SK-N-SH (cell line): ENCODE measurements at regions of chr14 and their contacts with region 1.

Region 1: GRCh38 chr14:62179367-62180018 is 417.3 kb downstream of the SNAPC1 start:
- DNase-seq: peak; percentile 22
- H3K4me3 ChIP-seq: no peak overlapping the region
- H3K27ac ChIP-seq: no peak overlapping the region
- H3K4me1 ChIP-seq: peaks cover 0 to 7% of the 10 kb centered on the region in 2 experiments; a peak in 1 of 4 replicates
- H3K27me3 ChIP-seq: no peaks in the 10 kb centered on the region
- CTCF ChIP-seq: peak; percentile 80
- EP300 ChIP-seq: no peak
- RAD21 ChIP-seq: peak; percentile 87

Region 2: GRCh38 chr14:61456720-61457119 is 722.8 kb before region 1 on chr14:
- CTCF ChIA-PET with region 1: no interaction called
- POLR2A ChIA-PET with region 1: no interaction called
- DNase-seq: peak; percentile 60
- H3K4me3 ChIP-seq: no peak overlapping the region
- H3K27ac ChIP-seq: no peak overlapping the region
- H3K4me1 ChIP-seq: peaks cover 0 to 9% of the 10 kb centered on the region in 2 experiments; a peak in 1 of 4 replicates
- H3K27me3 ChIP-seq: no peaks in the 10 kb centered on the region
- CTCF ChIP-seq: peak; percentile 93
- EP300 ChIP-seq: no peak
- RAD21 ChIP-seq: peak; percentile 85

Region 3: DNA sequence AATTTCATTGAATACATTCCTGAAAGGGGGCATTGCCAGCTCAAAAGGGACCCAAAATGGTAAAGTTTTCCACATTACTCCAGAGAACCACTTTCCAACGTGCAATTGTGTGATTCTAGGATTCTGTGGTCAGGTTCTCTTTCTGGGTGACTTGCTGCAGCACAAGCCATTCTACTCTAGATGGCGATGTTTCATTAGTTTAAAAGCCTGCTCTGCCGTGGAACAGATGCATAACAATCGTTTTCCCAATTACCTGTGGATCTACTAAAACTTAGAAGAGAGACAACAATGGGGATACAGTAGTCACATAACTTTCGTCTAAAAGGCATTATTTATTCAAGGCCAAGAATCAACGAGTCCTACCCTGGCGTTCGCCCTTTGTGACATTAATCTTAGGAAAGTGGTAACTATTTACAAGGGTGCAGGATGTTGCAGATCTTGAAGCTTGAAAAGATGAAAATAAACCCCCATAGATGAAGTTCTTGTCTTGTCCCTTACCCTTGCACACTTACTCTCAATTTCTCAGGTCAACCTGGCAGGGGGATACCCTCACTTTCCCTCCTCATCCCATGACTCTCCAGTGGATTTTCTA is 16.4 kb before region 1 on chr14:
- CTCF ChIA-PET with region 1: interaction called, 24 read pairs
- POLR2A ChIA-PET with region 1: no interaction called
- DNase-seq: peak; percentile 40
- H3K4me3 ChIP-seq: no peak overlapping the region; a peak in 1 of 4 replicates
- H3K27ac ChIP-seq: no peak overlapping the region
- H3K4me1 ChIP-seq: peaks cover 0 to 2% of the 10 kb centered on the region in 2 experiments; a peak in 2 of 4 replicates
- H3K27me3 ChIP-seq: peaks cover 19% of the 10 kb centered on the region; the same call in 1 of the 2 replicates
- CTCF ChIP-seq: peak; percentile 89
- EP300 ChIP-seq: no peak
- RAD21 ChIP-seq: peak; percentile 91

Region 4: DNA sequence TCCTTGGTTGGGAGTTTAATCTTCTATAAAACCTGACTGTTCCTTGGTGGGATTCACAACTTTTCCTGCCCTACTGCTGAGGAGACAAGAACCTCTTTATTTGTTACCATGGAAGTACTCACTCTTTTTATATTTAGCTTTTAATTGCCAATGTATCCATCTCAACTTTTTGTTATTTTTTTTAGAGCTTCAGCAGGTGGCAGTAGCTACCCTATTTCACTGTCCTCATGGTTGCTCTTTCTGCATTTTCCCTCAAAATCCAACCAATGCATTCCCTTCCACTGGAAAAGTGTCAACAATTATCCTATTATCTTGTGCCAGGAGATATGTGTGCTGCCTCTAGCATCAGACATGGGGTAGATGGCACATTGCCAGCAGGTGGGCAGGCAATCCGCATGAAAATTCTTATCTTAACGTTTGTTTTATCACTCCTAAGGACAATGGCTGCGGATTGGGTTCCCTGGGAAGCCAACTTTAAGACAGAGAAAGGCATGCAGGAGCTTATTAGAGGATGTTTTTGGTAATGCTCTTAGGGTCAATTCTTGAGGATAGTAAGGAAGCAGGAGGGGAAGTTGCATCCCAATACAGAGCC is 10.8 kb before region 1 on chr14:
- CTCF ChIA-PET with region 1: interaction called, 24 read pairs
- POLR2A ChIA-PET with region 1: no interaction called
- DNase-seq: no peak
- H3K4me3 ChIP-seq: no peak overlapping the region
- H3K27ac ChIP-seq: no peak overlapping the region
- H3K4me1 ChIP-seq: no peaks in the 10 kb centered on the region; a peak in 1 of 4 replicates
- H3K27me3 ChIP-seq: peaks cover 10% of the 10 kb centered on the region; the same call in 1 of the 2 replicates
- CTCF ChIP-seq: peak; percentile 38
- EP300 ChIP-seq: no peak
- RAD21 ChIP-seq: peak; percentile 20; the same call in 1 of the 2 replicates

Region 5: DNA sequence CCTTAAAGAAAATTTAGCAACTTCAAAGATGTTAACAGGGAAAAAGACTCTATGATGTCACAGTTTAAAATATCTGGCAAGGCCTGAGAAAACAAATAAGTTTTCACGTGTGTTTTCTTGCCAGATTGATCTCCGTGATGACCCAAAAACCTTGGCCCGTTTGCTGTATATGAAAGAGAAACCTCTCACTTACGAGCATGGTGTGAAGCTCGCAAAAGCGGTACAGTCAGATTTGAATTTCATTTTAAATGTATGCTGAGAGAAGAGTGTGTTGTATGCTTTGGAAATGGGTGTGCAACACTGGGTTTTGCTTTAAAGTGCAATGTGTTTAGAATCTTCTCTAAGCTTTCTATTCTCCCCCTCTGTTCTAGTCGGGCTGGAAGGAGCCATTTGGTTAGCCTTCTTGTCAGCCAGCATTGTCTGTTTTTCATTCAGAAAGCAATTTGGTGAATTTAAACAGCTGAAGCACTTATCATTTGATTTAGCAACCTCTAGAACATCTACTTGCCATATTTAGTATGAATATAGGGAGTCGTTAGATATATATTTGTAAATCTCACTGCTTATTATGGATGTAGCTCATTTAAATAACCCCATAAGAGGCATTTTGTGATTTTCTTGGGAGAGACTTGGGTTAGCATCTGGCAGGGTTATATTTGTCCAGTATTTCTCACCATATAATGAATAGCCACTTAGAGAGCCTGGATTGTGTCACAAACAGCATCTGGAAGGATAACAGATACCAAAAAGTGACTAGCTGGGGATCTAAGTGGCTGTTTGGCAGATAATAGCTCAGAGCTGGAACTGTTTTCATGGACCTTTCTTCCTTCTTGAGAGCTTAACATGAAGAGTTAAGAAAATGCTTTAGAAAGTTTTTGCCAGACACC is 1103.7 kb after region 1 on chr14:
- CTCF ChIA-PET with region 1: interaction called, 61 read pairs
- POLR2A ChIA-PET with region 1: no interaction called
- DNase-seq: peak; percentile 15
- H3K4me3 ChIP-seq: no peak overlapping the region
- H3K27ac ChIP-seq: no peak overlapping the region
- H3K4me1 ChIP-seq: no peaks in the 10 kb centered on the region; a peak in 2 of 4 replicates
- H3K27me3 ChIP-seq: no peaks in the 10 kb centered on the region
- CTCF ChIP-seq: no peak
- EP300 ChIP-seq: peak in 1 of 2 experiments; percentile 23; a peak in 1 of 4 replicates
- RAD21 ChIP-seq: no peak